ENCODE measurements at regions of chr3 and their contacts with region 1.

Region 1: GRCh38 chr3:177597311-177598096 is 400.2 kb upstream of the TBL1XR1 start:
- DNase-seq: peak; percentile 55 to 67 (median 57)
- H3K4me3 ChIP-seq: peak overlapping the region; percentile 18 to 49
- H3K4me3 Mint-ChIP-seq: peak overlapping the region; percentile 10 to 87 (median 77)
- H3K27ac ChIP-seq: peak overlapping the region; percentile 60
- H3K27ac Mint-ChIP-seq: peak overlapping the region; percentile 92 to 97 (median 95)
- H3K4me1 ChIP-seq: peaks cover 83% of the 10 kb centered on the region
- H3K4me1 Mint-ChIP-seq: peaks cover 67 to 90% (median 75%) of the 10 kb centered on the region in 4 donors
- H3K27me3 ChIP-seq: no peaks in the 10 kb centered on the region
- H3K27me3 Mint-ChIP-seq: no peaks in the 10 kb centered on the region

Region 2: DNA sequence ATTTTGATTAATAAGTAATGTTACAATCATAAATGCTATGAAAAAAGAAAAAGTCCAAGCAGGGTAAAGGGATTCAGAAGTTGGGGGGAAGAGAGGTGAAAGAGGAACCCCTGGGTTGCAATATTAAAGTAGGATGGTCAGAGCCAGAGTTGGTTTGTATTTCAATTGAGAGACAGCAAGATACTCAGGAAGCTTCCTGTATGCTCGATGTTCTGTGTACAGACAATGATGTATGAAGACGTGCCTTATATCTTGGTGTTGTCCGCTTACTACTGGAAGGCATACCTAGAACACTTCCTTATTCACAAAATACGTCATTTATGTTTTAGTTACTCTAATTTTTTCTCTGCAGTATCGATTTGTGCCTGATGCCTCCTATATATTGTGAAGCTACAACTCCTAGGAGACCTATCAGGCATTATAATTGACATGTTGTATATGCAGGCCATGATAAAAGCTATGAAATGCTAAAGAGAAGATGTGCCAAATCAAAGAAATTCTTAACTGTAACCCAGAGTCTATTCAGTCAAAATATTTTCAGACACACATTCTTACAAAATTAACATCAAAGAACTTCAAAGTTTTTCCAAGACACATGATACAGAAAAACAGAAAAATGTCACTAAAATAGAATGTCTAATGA is 487.7 kb before region 1 on chr3:
- CTCF ChIA-PET with region 1: no interaction called
- POLR2A ChIA-PET with region 1: no interaction called
- intact Hi-C with region 1: no loop called
- DNase-seq: peak; percentile 15 to 41 (median 36)
- H3K4me3 ChIP-seq: no peak overlapping the region
- H3K4me3 Mint-ChIP-seq: peak overlapping the region in 7 of 8 donors; percentile 22 to 80 (median 59)
- H3K27ac ChIP-seq: no peak overlapping the region
- H3K27ac Mint-ChIP-seq: peak overlapping the region; percentile 17 to 93 (median 80)
- H3K4me1 ChIP-seq: peaks cover 75% of the 10 kb centered on the region
- H3K4me1 Mint-ChIP-seq: peaks cover 59 to 80% (median 69%) of the 10 kb centered on the region in 4 donors
- H3K27me3 ChIP-seq: no peaks in the 10 kb centered on the region
- H3K27me3 Mint-ChIP-seq: no peaks in the 10 kb centered on the region

Region 3: DNA sequence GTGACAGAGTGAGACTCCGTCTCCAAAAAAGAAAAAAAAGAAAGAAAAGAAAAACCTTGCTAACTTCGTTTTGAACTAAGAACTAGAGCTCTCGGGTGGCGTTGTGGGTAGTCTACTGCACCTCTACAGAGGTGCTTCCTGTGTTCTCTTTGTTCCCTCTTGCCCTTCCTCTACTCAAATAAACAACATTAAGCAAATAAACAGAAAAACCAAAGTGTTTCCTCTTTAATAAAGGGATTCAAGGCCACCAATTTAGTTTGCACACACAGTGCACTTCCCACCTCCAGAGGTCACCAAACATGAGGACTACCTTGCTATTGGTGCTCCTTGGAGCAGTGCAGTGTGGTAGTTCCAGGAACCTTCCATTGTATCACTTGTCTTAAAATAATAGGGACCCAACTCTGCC is 46.1 kb before region 1 on chr3:
- CTCF ChIA-PET with region 1: no interaction called
- POLR2A ChIA-PET with region 1: interaction called, 6 read pairs
- intact Hi-C with region 1: loop called (anchors 2 kb)
- DNase-seq: peak in 4 of 5 donors; percentile 16 to 22 (median 20)
- H3K4me3 ChIP-seq: no peak overlapping the region
- H3K4me3 Mint-ChIP-seq: peak overlapping the region in 7 of 8 donors; percentile 45 to 81 (median 73)
- H3K27ac ChIP-seq: no peak overlapping the region
- H3K27ac Mint-ChIP-seq: peak overlapping the region; percentile 45 to 95 (median 82)
- H3K4me1 ChIP-seq: peaks cover 63% of the 10 kb centered on the region
- H3K4me1 Mint-ChIP-seq: peaks cover 58 to 96% (median 73%) of the 10 kb centered on the region in 4 donors
- H3K27me3 ChIP-seq: no peaks in the 10 kb centered on the region
- H3K27me3 Mint-ChIP-seq: no peaks in the 10 kb centered on the region

Region 4: GRCh38 chr3:177646749-177647148 is 49.2 kb after region 1 on chr3:
- CTCF ChIA-PET with region 1: interaction called, 8 read pairs
- POLR2A ChIA-PET with region 1: interaction called, 13 read pairs
- intact Hi-C with region 1: loop called (anchors 2 kb)
- DNase-seq: peak; percentile 26 to 67 (median 38)
- H3K4me3 ChIP-seq: no peak overlapping the region
- H3K4me3 Mint-ChIP-seq: peak overlapping the region in 6 of 8 donors; percentile 37 to 82 (median 59)
- H3K27ac ChIP-seq: no peak overlapping the region
- H3K27ac Mint-ChIP-seq: peak overlapping the region; percentile 70 to 88 (median 80)
- H3K4me1 ChIP-seq: peaks cover 73% of the 10 kb centered on the region
- H3K4me1 Mint-ChIP-seq: peaks cover 55 to 70% (median 63%) of the 10 kb centered on the region in 4 donors
- H3K27me3 ChIP-seq: no peaks in the 10 kb centered on the region
- H3K27me3 Mint-ChIP-seq: no peaks in the 10 kb centered on the region

Region 5: GRCh38 chr3:178001670-178002101 is 404.2 kb after region 1 on chr3:
- CTCF ChIA-PET with region 1: no interaction called
- POLR2A ChIA-PET with region 1: no interaction called
- intact Hi-C with region 1: loop called (anchors 10 kb)
- DNase-seq: peak in 3 of 5 donors; percentile 7 to 19 (median 11)
- H3K4me3 ChIP-seq: no peak overlapping the region
- H3K4me3 Mint-ChIP-seq: peak overlapping the region in 7 of 8 donors; percentile 21 to 79 (median 64)
- H3K27ac ChIP-seq: peak overlapping the region; percentile 5
- H3K27ac Mint-ChIP-seq: peak overlapping the region; percentile 15 to 93 (median 80)
- H3K4me1 ChIP-seq: peaks cover 48% of the 10 kb centered on the region
- H3K4me1 Mint-ChIP-seq: peaks cover 35 to 55% (median 46%) of the 10 kb centered on the region in 4 donors
- H3K27me3 ChIP-seq: no peaks in the 10 kb centered on the region
- H3K27me3 Mint-ChIP-seq: no peaks in the 10 kb centered on the region

Measured in CD4-positive, alpha-beta memory T cell (primary cell).